GM13977 (cell line): ENCODE measurements at regions of chr17 and their contacts with region 1.

Region 1: DNA sequence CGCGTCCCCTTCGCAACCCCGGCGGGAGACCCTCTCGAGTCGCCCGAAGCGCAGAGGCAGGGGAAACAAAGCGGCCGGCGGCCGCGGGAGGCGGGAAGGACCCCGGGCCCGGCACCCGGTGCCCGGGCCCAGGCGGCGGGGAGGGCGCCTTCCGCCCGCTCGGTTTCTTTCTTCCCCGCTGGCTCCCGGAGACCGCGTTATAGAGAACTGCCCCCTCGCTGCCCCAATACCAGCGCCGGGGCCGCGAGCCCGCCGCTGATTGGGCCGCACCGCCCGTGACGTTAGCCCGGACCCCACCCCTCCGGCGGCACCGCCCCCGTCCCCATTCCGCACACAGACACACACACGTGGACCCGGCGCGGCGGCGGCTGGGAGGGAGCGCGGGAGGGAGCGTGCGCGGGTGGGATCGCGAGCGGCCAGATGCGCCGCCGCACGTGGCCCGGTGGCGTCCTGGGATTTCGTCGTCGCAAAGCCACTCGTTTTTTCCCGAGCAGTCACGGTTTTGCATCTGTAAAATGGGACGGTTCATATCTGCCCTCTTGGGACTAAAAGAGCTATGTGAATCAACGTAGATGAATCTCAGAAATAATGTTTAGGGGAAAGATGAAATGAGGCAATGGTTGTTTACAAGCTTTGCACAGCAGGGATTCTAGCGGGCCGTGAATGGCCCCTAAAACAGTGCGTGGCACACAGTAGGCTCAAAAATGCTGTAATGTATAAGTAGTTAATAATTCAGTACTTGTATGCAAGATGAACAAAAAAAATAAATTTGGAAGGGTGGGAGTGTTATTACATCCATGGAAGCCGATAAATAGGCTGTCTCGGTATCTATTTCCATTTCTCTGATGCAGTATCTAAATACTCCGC is at the start of gene EPOP:
- DNase-seq: peak; percentile 96
- CTCF ChIP-seq: no peak

Region 2: GRCh38 chr17:38584350-38584925 is 90.5 kb before region 1 on chr17:
- in situ Hi-C with region 1: no loop called
- DNase-seq: peak; percentile 83
- CTCF ChIP-seq: peak; percentile 94

Region 3: GRCh38 chr17:38735161-38735997 is 60.4 kb after region 1 on chr17:
- in situ Hi-C with region 1: loop called (anchors 5 kb)
- DNase-seq: peak; percentile 86
- CTCF ChIP-seq: peak; percentile 97